Right cardiac atrium (tissue), 5 donors: ENCODE measurements at regions of chr1 and their contacts with region 1.

Region 1: DNA sequence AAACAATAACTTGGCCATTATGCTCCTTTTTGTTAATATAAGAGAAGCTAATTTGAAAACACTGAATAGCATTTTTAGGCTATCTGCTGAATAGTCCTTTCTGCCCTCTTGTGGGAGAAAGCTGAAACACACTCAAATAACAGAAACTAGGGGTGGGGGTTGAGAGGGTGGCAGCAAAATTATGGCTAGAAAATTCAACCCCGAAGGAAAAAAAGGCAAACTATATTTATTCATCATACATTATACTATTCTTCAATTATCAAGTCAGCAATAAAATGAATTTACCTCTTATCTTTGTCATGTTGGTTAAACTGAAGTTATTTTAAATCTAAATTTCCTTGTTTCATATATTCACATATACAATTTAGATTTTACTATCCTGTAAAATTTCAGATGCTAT is 255.9 kb downstream of the FAF1 start:
- DNase-seq: no peak
- ATAC-seq: no peak
- H3K4me3 ChIP-seq: no peak overlapping the region
- H3K27ac ChIP-seq: no peak overlapping the region
- H3K4me1 ChIP-seq: no peaks in the 10 kb centered on the region
- H3K27me3 ChIP-seq: no peaks in the 10 kb centered on the region

Region 2: GRCh38 chr1:50368179-50369012 is 335.7 kb before region 1 on chr1:
- intact Hi-C with region 1: loop called in 1 of 4 experiments (anchors 10 kb)
- DNase-seq: peak in 2 of 3 donors; percentile 58 to 59
- ATAC-seq: peak; percentile 26 to 53
- H3K4me3 ChIP-seq: no peak overlapping the region
- H3K27ac ChIP-seq: no peak overlapping the region
- H3K4me1 ChIP-seq: no peaks in the 10 kb centered on the region
- H3K27me3 ChIP-seq: no peaks in the 10 kb centered on the region